Mammary epithelial cell (primary cell): ENCODE measurements at regions of chr17 and their contacts with region 1.

Region 1: GRCh38 chr17:8222630-8223356 is 12.4 kb upstream of the AURKB start:
- DNase-seq: peak; percentile 96
- H3K4me3 ChIP-seq: peak overlapping the region; percentile 53 to 74 (median 60)
- H3K27ac ChIP-seq: peak overlapping the region; percentile 74
- H3K4me1 ChIP-seq: peaks cover 25% of the 10 kb centered on the region
- H3K27me3 ChIP-seq: no peaks in the 10 kb centered on the region
- CTCF ChIP-seq: no peak

Region 2: GRCh38 chr17:8138672-8139371 is 84.0 kb before region 1 on chr17:
- CTCF ChIA-PET with region 1: interaction called, 3 read pairs
- dilution Hi-C with region 1: no loop called
- in situ Hi-C with region 1: no loop called
- intact Hi-C with region 1: loop called (anchors 1 kb)
- DNase-seq: peak; percentile 96
- H3K4me3 ChIP-seq: peak overlapping the region; percentile 10 to 44 (median 29)
- H3K27ac ChIP-seq: peak overlapping the region; percentile 61
- H3K4me1 ChIP-seq: peaks cover 18% of the 10 kb centered on the region
- H3K27me3 ChIP-seq: no peaks in the 10 kb centered on the region
- CTCF ChIP-seq: peak; percentile 83 to 89

Region 3: GRCh38 chr17:8173056-8173870 is 49.5 kb before region 1 on chr17:
- CTCF ChIA-PET with region 1: no interaction called
- dilution Hi-C with region 1: no loop called
- in situ Hi-C with region 1: no loop called
- intact Hi-C with region 1: loop called (anchors 1 kb)
- DNase-seq: peak; percentile 99
- H3K4me3 ChIP-seq: peak overlapping the region; percentile 38 to 53 (median 48)
- H3K27ac ChIP-seq: peak overlapping the region; percentile 100
- H3K4me1 ChIP-seq: peaks cover 25% of the 10 kb centered on the region
- H3K27me3 ChIP-seq: no peaks in the 10 kb centered on the region
- CTCF ChIP-seq: no peak

Region 4: DNA sequence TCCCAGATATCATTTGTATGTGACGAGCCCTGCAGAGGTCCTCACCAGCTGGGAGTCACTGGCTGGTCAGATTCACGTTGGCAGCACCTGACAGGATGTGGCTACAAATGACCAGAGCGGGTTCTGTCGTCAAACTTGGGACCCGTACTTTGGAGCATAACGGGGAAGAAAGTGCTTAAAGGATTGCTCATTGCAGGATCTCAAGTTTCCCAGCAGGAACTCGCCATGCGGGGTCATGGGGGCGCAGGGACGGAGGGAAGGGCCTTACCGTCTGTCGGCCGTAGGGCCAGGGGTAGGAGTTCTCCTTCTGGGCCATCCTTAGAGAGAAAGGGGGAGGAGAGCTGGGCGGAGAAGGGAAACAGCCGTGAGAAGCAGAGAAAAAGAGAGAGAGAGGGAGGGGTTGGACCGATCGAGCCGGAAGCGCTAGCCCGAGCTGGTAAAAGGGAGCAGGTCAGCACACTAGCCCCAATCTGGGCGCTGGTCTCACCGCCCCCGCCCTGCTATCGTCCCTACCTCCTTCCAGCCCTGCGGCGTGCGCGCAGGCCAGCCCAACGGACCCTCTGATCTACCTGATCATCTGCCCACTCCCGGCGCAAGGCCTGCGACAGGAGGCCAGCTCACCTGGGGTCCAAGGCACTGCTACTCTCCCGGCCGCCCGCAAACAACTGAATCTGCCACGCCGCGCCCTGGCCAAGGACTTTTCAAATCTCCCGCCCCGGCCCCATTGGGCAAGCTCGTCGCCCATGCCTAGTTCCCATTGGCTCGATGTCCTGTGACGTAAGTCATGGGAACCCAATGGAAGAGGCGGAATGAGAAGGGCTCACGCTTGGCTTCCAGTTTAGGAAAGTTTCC is 12.7 kb before region 1 on chr17 and contains the start of gene AURKB:
- CTCF ChIA-PET with region 1: no interaction called
- dilution Hi-C with region 1: no loop called
- in situ Hi-C with region 1: no loop called
- intact Hi-C with region 1: loop called (anchors 1 kb)
- DNase-seq: peak; percentile 96
- H3K4me3 ChIP-seq: peak within 1 kb of the TSS; percentile 67 to 99 (median 90)
- H3K27ac ChIP-seq: peak within 1 kb of the TSS; percentile 90
- H3K4me1 ChIP-seq: peaks cover 22% of the 10 kb centered on the region
- H3K27me3 ChIP-seq: no peaks in the 10 kb centered on the region
- CTCF ChIP-seq: no peak
- total RNA-seq, gene AURKB: 1.8 to 59.3 TPM

Region 5: DNA sequence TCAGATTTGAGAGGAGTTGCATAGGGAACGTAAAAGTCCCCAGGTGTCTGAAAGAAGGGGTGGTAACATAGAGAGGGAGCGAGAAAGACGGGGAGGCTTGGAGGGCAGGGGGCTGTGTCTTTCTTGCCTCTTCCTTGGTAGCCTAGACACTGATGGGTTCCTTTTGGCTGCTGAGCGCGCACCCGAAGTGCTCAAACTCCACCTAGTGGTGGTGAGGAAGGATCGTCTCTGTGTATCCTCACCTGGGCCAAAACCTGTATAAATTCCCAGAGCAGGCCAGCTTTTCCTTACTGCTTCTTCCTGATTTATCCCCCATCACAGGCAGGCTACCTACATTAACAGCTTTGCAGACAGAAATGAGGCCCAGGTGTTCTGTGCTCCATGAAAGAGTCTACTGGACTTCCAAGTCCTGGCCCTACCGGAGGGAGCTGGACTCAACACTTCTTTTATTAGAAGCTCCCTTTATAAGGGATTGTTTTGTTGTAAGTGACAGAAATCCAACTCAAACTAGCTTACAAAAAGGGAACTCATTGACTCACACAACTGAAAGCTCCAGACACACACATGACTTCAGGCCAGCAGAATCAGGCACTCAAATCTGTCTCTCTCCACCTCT is 77.9 kb after region 1 on chr17:
- CTCF ChIA-PET with region 1: interaction called, 4 read pairs
- dilution Hi-C with region 1: no loop called
- in situ Hi-C with region 1: no loop called
- intact Hi-C with region 1: loop called (anchors 1 kb)
- DNase-seq: peak; percentile 50
- H3K4me3 ChIP-seq: no peak overlapping the region
- H3K27ac ChIP-seq: no peak overlapping the region
- H3K4me1 ChIP-seq: no peaks in the 10 kb centered on the region
- H3K27me3 ChIP-seq: no peaks in the 10 kb centered on the region
- CTCF ChIP-seq: peak; percentile 89 to 90